ENCODE measurements at regions of chr18 and their contacts with region 1.

Region 1: DNA sequence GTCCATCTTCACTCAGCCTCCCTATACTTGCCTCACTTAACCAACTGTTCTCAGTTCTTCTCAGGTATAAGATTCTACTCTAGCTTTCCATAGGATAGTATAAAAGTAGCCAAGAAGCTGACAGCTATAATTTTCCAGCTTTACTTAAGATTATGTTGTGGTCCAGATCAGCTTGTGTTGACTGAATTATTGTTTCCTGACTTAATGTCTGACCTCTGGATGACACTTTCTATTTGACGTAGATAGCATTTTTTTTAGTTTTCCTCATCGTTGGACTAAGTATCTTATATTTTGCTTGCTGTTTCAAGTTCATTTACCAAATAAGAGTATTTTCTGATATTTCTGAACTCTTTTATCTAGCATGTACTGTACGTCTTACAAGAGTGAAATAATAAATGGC is 1272.5 kb upstream of the CDH2 start:
- DNase-seq: no peak
- ATAC-seq: no peak
- H3K4me3 ChIP-seq: no peak overlapping the region
- H3K27ac ChIP-seq: no peak overlapping the region
- H3K4me1 ChIP-seq: no peaks in the 10 kb centered on the region
- H3K27me3 ChIP-seq: no peaks in the 10 kb centered on the region
- CTCF ChIP-seq: no peak
- EP300 ChIP-seq: no peak
- POLR2A ChIP-seq: no peak
- RAD21 ChIP-seq: no peak

Region 2: DNA sequence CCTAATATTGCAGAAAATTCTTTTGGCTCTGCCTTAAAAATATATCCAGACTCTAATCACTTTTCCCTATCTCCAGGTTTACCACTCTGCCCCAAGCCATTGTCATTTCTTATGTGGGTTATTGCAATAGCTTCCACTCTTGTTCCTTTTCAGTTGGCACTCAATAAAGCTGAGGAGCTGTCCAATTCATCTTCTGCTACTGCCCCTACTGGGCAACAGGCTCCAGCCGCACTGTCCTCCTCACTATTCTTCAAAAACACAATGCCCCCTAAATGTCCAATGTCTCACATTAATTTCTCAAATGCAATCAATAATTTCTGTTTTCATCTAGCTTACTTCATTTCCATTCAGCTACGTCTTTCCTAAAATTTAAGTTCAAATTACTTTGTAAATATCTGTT is 10.0 kb before region 1 on chr18:
- CTCF ChIA-PET with region 1: no interaction called
- POLR2A ChIA-PET with region 1: no interaction called
- RAD21 ChIA-PET with region 1: no interaction called
- SMC1A ChIA-PET with region 1: no interaction called
- in situ Hi-C with region 1: no loop called
- intact Hi-C with region 1: no loop called
- DNase-seq: no peak
- ATAC-seq: no peak
- H3K4me3 ChIP-seq: no peak overlapping the region
- H3K27ac ChIP-seq: no peak overlapping the region
- H3K4me1 ChIP-seq: no peaks in the 10 kb centered on the region
- H3K27me3 ChIP-seq: no peaks in the 10 kb centered on the region
- CTCF ChIP-seq: no peak
- EP300 ChIP-seq: no peak
- POLR2A ChIP-seq: no peak
- RAD21 ChIP-seq: no peak

Region 3: GRCh38 chr18:29501952-29502351 is 52.5 kb after region 1 on chr18:
- CTCF ChIA-PET with region 1: no interaction called
- POLR2A ChIA-PET with region 1: no interaction called
- RAD21 ChIA-PET with region 1: no interaction called
- SMC1A ChIA-PET with region 1: no interaction called
- in situ Hi-C with region 1: no loop called
- intact Hi-C with region 1: loop called (anchors 10 kb)
- DNase-seq: no peak
- ATAC-seq: no peak
- H3K4me3 ChIP-seq: no peak overlapping the region
- H3K27ac ChIP-seq: no peak overlapping the region
- H3K4me1 ChIP-seq: no peaks in the 10 kb centered on the region
- H3K27me3 ChIP-seq: no peaks in the 10 kb centered on the region
- CTCF ChIP-seq: no peak
- EP300 ChIP-seq: no peak
- POLR2A ChIP-seq: no peak
- RAD21 ChIP-seq: no peak

Measured in GM12878 (cell line).